Activated CD8-positive, alpha-beta memory T cell treated with anti-CD3 and anti-CD28 coated beads, Interleukin-2, amount 10 ng/mL, durations not matched to agents 7 days and 5 days (primary cell): ENCODE measurements at regions of chr1 and their contacts with region 1.

Region 1: GRCh38 chr1:169794530-169795416 is at the start of gene METTL18:
- DNase-seq: peak; percentile 96
- ATAC-seq: peak; percentile 96
- H3K4me3 Mint-ChIP-seq: peak within 1 kb of the TSS; percentile 96
- H3K27ac Mint-ChIP-seq: peak within 1 kb of the TSS; percentile 99
- H3K4me1 Mint-ChIP-seq: peaks cover 58% of the 10 kb centered on the region
- H3K27me3 Mint-ChIP-seq: no peaks in the 10 kb centered on the region
- total RNA-seq, gene METTL18: 10.9 to 12.6 TPM

Region 2: GRCh38 chr1:169694304-169695075 is 100.3 kb before region 1 on chr1:
- CTCF ChIA-PET with region 1: no interaction called
- DNase-seq: peak; percentile 75
- ATAC-seq: peak; percentile 62
- H3K4me3 Mint-ChIP-seq: no peak overlapping the region
- H3K27ac Mint-ChIP-seq: peak overlapping the region; percentile 79
- H3K4me1 Mint-ChIP-seq: peaks cover 94% of the 10 kb centered on the region
- H3K27me3 Mint-ChIP-seq: no peaks in the 10 kb centered on the region

Region 3: GRCh38 chr1:169809370-169810095 is 14.8 kb after region 1 on chr1:
- CTCF ChIA-PET with region 1: interaction called, 12 read pairs
- DNase-seq: no peak
- ATAC-seq: no peak
- H3K4me3 Mint-ChIP-seq: no peak overlapping the region
- H3K27ac Mint-ChIP-seq: no peak overlapping the region
- H3K4me1 Mint-ChIP-seq: peaks cover 7% of the 10 kb centered on the region
- H3K27me3 Mint-ChIP-seq: no peaks in the 10 kb centered on the region